ENCODE measurements at regions of chrX and their contacts with region 1.

Region 1: DNA sequence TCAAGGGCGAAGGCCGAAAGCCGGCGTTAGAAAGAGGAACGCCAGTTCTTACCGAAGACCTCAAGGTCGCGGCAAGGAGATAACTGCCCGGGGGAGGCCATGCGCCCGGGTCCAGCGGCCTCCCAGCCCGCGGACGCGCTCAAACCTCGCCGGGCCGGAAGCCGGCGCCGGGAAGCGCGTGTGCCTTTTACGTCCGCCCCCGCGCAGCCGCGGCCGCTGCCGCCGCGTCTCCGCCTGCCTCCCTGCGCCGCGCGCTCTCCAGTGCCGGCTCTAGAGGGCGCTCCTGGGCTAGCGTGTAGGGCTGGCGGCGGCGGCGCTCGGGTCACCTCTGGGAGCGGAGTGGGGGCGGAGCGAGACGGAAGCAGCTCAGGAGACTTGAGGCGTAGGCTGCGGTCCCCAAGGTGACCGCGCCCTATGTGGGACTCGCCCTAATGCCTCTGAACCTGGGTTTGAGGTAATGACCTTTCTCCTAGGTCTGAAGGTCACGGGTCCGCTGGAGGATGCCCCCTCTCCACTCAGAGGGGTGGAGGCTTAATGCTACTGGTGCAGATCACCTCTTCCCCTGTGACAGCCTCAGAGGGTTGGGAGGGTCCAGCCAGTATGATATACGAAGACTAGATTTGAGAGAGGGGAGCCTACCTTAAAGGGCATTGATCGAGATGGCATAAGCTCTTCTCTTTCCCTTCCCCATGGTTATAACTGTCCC is 839 bp downstream of the SLC25A5 start:
- DNase-seq: peak; percentile 92
- H3K4me3 Mint-ChIP-seq: peak overlapping the region; percentile 83
- H3K27ac Mint-ChIP-seq: peak overlapping the region; percentile 92
- H3K4me1 Mint-ChIP-seq: peaks cover 15% of the 10 kb centered on the region
- H3K27me3 Mint-ChIP-seq: no peaks in the 10 kb centered on the region

Region 2: DNA sequence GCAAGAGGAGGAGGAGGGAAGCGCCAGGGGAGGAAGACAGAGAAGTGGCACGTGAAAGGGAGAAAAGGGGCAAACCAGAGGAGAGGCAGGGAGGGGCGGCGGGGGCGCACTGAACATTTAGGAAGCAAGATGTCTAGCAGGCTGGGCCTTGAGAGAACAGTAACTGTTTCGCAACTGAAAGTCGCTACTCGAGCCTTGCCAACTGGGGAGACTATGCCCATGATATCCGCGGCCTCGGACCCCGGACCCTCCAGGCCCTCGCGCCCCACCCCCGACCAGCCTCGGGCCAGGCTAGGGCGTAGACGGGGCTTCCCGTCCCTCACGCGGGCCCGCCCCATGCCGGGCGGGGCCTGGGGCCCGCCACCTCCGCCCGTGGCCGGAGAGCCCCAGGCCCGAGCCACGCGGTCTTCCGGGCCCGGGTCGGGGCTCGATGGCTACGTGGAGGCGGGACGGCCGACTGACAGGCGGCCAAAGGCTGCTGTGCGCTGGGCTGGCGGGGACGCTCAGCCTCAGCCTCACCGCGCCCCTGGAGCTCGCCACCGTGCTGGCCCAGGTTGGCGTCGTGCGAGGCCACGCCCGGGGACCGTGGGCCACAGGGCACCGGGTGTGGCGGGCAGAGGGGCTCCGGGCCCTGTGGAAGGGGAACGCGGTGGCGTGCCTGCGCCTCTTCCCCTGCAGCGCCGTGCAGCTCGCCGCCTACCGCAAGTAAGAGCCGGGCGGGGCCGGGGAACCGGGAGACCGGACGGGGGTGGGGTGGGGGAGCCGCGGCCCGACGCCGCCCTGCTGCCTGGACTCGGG is 69.9 kb before region 1 on chrX and contains the start of gene SLC25A43:
- CTCF ChIA-PET with region 1: no interaction called
- intact Hi-C with region 1: loop called (anchors 1 kb)
- DNase-seq: peak; percentile 36
- H3K4me3 Mint-ChIP-seq: peak within 1 kb of the TSS; percentile 75
- H3K27ac Mint-ChIP-seq: no peak within 1 kb of the TSS
- H3K4me1 Mint-ChIP-seq: peaks cover 11% of the 10 kb centered on the region
- H3K27me3 Mint-ChIP-seq: no peaks in the 10 kb centered on the region
- total RNA-seq, gene SLC25A43: 2.9 to 3.2 TPM

Region 3: DNA sequence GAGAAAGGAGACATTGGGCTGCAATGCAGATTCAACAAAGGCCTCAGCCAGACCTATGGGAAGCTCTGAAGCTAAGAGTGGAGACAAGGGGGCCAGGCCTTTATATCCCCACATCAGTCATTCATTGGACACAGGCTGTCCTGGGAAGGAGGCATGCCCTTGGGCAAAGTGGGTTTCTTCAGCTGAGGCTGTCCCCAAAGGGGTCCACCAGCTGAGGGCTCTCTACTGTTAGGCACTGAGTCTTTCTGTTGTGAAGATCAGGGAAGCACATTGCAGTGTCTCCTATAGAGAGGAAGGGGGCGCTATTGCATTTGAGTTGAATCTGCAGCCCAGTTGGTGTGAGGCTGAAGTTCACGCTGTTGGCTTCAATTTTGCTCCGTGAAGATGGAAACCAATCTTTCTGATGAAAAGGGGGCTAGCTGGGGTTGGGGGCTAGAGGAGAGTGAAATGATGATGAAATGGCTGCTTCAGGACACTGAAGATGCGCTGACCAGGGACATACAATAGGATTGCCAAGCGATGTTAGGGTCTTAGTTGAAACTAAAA is 47.1 kb after region 1 on chrX:
- CTCF ChIA-PET with region 1: interaction called, 3 read pairs
- intact Hi-C with region 1: loop called (anchors 1 kb)
- DNase-seq: peak; percentile 45
- H3K4me3 Mint-ChIP-seq: no peak overlapping the region
- H3K27ac Mint-ChIP-seq: no peak overlapping the region
- H3K4me1 Mint-ChIP-seq: no peaks in the 10 kb centered on the region
- H3K27me3 Mint-ChIP-seq: no peaks in the 10 kb centered on the region

Region 4: DNA sequence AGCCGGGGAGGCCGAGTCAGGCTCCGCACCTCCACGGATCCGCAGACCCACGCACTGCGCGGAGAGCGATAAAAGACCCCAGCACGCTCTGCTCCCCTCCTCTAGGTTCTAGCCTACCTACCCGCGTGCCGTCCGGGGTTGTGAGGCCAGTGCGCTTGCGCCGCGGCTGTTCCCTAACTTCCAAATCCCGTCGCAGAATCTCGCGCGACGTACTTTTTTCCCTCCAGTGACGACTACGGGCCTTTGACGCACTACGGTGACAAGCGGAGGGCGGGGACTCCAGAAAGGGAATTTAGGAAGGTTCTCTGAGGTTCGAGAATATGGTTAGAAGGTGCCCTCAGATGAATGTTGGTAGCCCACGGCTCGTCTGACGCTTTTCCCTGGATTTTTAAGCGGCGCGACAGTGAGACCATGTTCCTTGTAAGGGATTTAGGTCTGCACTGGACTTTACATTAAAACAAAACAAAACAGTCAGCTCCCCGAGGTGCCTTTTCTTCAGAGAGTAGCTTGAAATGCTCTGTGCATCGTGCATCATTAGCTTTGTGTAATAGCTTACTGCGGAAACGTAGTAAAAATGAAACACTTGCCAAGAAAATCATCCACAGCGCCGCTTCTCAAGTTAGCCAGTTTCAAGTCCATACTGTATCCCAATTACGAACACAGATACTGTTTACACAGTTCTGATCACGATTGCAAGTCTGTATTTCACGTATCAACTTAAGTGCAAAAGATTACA is 137.4 kb after region 1 on chrX and contains the start of gene NKRF:
- CTCF ChIA-PET with region 1: no interaction called
- intact Hi-C with region 1: loop called (anchors 2 kb)
- DNase-seq: peak; percentile 94
- H3K4me3 Mint-ChIP-seq: peak within 1 kb of the TSS; percentile 96
- H3K27ac Mint-ChIP-seq: peak within 1 kb of the TSS; percentile 93
- H3K4me1 Mint-ChIP-seq: peaks cover 39% of the 10 kb centered on the region
- H3K27me3 Mint-ChIP-seq: no peaks in the 10 kb centered on the region
- total RNA-seq, gene NKRF: 15.8 to 17.0 TPM

Region 5: DNA sequence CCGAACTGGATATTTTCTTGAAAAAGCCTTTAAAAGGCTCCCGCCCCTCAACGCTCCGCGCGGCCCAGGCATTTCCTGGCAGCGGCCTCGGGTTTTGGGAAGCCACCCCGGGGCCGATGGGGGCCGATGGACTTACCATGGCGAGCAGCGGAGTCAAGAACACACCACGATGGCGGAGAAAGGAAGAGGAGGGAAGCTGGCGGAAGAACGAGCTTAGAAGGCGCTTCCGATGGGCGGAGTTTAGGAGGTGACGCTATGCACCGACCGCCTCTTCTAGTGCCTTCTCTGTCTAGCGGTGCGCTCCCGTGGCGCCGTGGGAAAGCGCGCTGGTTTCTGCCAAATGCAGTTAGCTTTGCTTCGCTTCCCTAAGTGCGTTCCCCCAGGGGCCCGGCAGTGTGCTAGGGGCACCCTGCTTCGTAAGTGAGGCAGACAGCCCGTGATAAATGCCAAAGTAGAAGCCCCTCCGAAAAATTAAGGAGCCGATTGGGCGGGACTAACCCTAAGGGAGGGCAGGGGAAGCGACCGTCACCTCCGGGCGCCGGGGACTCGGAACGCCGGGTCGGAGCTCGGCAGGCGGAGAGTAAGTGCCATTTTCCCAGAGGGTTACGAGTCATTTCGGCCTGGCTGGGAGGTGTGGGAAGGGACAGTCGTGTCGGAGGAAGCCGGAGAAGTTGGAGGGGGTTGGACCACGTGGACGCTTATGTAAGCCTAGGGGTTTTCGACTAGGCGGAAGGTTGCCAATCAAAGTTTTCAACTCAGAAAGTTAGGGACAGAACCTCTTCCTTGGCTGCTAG is 322.6 kb after region 1 on chrX and contains the start of gene RPL39:
- CTCF ChIA-PET with region 1: no interaction called
- intact Hi-C with region 1: loop called (anchors 1 kb)
- DNase-seq: peak; percentile 82
- H3K4me3 Mint-ChIP-seq: peak within 1 kb of the TSS; percentile 86
- H3K27ac Mint-ChIP-seq: peak within 1 kb of the TSS; percentile 95
- H3K4me1 Mint-ChIP-seq: peaks cover 29% of the 10 kb centered on the region
- H3K27me3 Mint-ChIP-seq: no peaks in the 10 kb centered on the region
- total RNA-seq, gene RPL39: 3,049 to 3,109 TPM

Region 6: GRCh38 chrX:119943185-119943988 is 474.3 kb after region 1 on chrX and contains the start of gene NKAP:
- CTCF ChIA-PET with region 1: no interaction called
- intact Hi-C with region 1: loop called (anchors 2 kb)
- DNase-seq: peak; percentile 86
- H3K4me3 Mint-ChIP-seq: peak within 1 kb of the TSS; percentile 98
- H3K27ac Mint-ChIP-seq: peak within 1 kb of the TSS; percentile 95
- H3K4me1 Mint-ChIP-seq: peaks cover 23% of the 10 kb centered on the region
- H3K27me3 Mint-ChIP-seq: no peaks in the 10 kb centered on the region
- total RNA-seq, gene NKAP: 12.3 to 12.7 TPM